Dendritic cell treated with granulocyte-macrophage colony-stimulating factor and Interleukin-4, amounts not matched to agents 40 ng/mL and 50 ng/mL, for 4 days (primary cell): ENCODE measurements at regions of chr1 and their contacts with region 1.

Region 1: GRCh38 chr1:91712981-91713841 is 172.7 kb downstream of the TGFBR3 start:
- H3K4me3 Mint-ChIP-seq: peak overlapping the region; percentile 44
- H3K27ac Mint-ChIP-seq: peak overlapping the region; percentile 89
- H3K4me1 Mint-ChIP-seq: peaks cover 13% of the 10 kb centered on the region
- H3K27me3 Mint-ChIP-seq: peaks cover 5% of the 10 kb centered on the region

Region 2: DNA sequence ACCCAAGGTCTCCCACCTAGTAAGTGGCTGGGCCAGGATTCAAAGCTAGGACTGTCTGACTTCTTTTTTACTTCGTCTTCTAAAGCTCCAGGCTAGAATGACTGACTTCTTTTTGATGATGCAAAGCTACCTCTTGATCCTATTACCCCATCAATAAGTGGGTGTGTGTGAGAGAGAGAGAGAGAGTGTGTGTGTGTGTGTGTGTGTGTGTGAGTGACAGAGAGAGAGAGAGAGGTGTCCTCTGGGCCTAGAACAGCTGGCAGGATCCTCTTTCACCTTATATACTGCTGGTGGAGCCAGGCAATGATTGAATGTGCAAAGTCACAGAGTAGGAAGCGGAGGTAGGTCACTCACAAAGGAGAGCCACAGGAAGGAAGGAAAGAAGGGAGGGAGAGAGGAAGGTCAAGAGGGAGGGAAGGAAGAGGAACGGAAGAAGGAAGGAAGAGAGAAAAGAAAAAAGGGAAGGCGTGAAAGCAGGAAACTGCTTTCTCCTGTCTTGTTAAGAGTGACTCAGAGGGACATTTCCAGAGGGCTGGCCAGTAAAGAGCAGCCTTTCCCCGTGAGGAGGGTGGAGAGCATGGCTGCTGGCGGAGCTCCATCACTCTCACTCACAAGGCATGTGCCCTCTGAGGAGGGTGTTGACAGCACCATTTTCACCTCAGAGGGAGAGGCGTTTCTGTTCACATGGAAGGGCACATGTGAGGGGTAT is 143.6 kb before region 1 on chr1:
- intact Hi-C with region 1: loop called (anchors 5 kb)
- H3K4me3 Mint-ChIP-seq: no peak overlapping the region
- H3K27ac Mint-ChIP-seq: no peak overlapping the region
- H3K4me1 Mint-ChIP-seq: peaks cover 44% of the 10 kb centered on the region
- H3K27me3 Mint-ChIP-seq: peaks cover 75% of the 10 kb centered on the region

Region 3: GRCh38 chr1:91900538-91900937 is 187.3 kb after region 1 on chr1:
- intact Hi-C with region 1: no loop called
- H3K4me3 Mint-ChIP-seq: no peak overlapping the region
- H3K27ac Mint-ChIP-seq: no peak overlapping the region
- H3K4me1 Mint-ChIP-seq: no peaks in the 10 kb centered on the region
- H3K27me3 Mint-ChIP-seq: peaks cover 7% of the 10 kb centered on the region